Activated T-helper 1 cell treated with anti-CD3 and anti-CD28 coated beads, Interleukin-12 subunit alpha, Interleukin-12 subunit beta, Interleukin-2, Interleukin-4 antibody, amounts not matched to agents 30 ng/mL and 10 ng/mL and 1 ng/mL, durations not matched to agents 14 hours and 24 hours and 36 hours (primary cell): ENCODE measurements at regions of chr3 and their contacts with region 1.

Region 1: GRCh38 chr3:66276705-66277274 is 56.0 kb downstream of the SLC25A26 start:
- DNase-seq: peak; percentile 41
- H3K4me3 Mint-ChIP-seq: no peak overlapping the region
- H3K27ac Mint-ChIP-seq: no peak overlapping the region
- H3K4me1 Mint-ChIP-seq: peaks cover 21% of the 10 kb centered on the region
- H3K27me3 Mint-ChIP-seq: no peaks in the 10 kb centered on the region

Region 2: GRCh38 chr3:66253790-66254620 is 22.8 kb before region 1 on chr3:
- intact Hi-C with region 1: loop called (anchors 2 kb)
- DNase-seq: no peak
- H3K4me3 Mint-ChIP-seq: no peak overlapping the region
- H3K27ac Mint-ChIP-seq: no peak overlapping the region
- H3K4me1 Mint-ChIP-seq: no peaks in the 10 kb centered on the region
- H3K27me3 Mint-ChIP-seq: no peaks in the 10 kb centered on the region

Region 3: DNA sequence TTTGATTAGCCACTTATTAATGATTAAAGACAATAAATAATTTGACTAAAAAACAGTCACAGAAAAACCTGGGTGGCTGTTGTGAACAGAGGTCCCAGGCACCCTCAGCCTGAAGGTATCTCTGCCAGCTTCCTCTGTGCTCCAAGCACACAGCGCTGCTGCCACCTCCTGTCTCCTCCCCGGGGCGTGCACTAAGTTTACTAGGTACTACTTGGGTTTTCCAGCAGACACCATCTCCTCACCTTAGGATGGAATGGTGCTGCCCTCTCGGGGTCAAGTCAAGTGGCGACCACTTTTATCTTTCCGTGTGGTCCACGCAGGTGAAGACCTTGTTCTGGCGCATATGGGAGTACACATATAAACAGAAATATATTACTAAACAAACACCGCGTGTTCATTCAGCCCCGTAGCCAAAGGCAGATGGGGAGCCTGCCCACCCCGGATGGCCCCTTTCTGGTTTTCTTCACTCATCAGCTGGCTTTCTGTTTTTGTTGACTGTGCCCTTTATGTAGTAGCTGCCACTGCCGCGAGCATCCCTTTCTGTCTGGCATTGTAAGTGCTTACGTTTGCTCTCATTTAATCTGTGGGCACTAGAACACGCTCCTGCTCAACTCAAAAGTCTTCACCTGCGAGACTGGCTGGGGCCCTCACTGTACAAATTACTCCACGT is 96.0 kb after region 1 on chr3:
- intact Hi-C with region 1: loop called (anchors 1 kb)
- DNase-seq: no peak
- H3K4me3 Mint-ChIP-seq: no peak overlapping the region
- H3K27ac Mint-ChIP-seq: no peak overlapping the region
- H3K4me1 Mint-ChIP-seq: peaks cover 2% of the 10 kb centered on the region
- H3K27me3 Mint-ChIP-seq: no peaks in the 10 kb centered on the region

Region 4: GRCh38 chr3:66407611-66408218 is 130.9 kb after region 1 on chr3:
- intact Hi-C with region 1: loop called (anchors 1 kb)
- DNase-seq: peak; percentile 63
- H3K4me3 Mint-ChIP-seq: no peak overlapping the region
- H3K27ac Mint-ChIP-seq: no peak overlapping the region
- H3K4me1 Mint-ChIP-seq: peaks cover 16% of the 10 kb centered on the region
- H3K27me3 Mint-ChIP-seq: no peaks in the 10 kb centered on the region

Region 5: GRCh38 chr3:66816090-66816761 is 539.4 kb after region 1 on chr3:
- intact Hi-C with region 1: loop called (anchors 1 kb)
- DNase-seq: no peak
- H3K4me3 Mint-ChIP-seq: no peak overlapping the region
- H3K27ac Mint-ChIP-seq: no peak overlapping the region
- H3K4me1 Mint-ChIP-seq: no peaks in the 10 kb centered on the region
- H3K27me3 Mint-ChIP-seq: peaks cover 14% of the 10 kb centered on the region

Region 6: GRCh38 chr3:66822186-66823008 is 545.6 kb after region 1 on chr3:
- intact Hi-C with region 1: loop called (anchors 1 kb)
- DNase-seq: peak; percentile 50
- H3K4me3 Mint-ChIP-seq: no peak overlapping the region
- H3K27ac Mint-ChIP-seq: no peak overlapping the region
- H3K4me1 Mint-ChIP-seq: no peaks in the 10 kb centered on the region
- H3K27me3 Mint-ChIP-seq: peaks cover 6% of the 10 kb centered on the region